ENCODE measurements at regions of chr17 and their contacts with region 1.

Region 1: GRCh38 chr17:30236766-30237165 is 1.3 kb upstream of the SLC6A4 start:
- DNase-seq: no peak
- ATAC-seq: peak; percentile 75
- H3K4me3 ChIP-seq: no peak overlapping the region
- H3K27ac ChIP-seq: no peak overlapping the region
- H3K4me1 ChIP-seq: peaks cover 29% of the 10 kb centered on the region
- H3K27me3 ChIP-seq: no peaks in the 10 kb centered on the region
- CTCF ChIP-seq: peak; percentile 38 to 70 (median 65)
- EP300 ChIP-seq: no peak
- POLR2A ChIP-seq: no peak
- RAD21 ChIP-seq: peak; percentile 80

Region 2: GRCh38 chr17:30116661-30117551 is 119.9 kb before region 1 on chr17 and contains the start of gene NSRP1:
- CTCF ChIA-PET with region 1: interaction called, 20 read pairs
- POLR2A ChIA-PET with region 1: no interaction called
- RAD21 ChIA-PET with region 1: interaction called, 5 read pairs
- SMC1A ChIA-PET with region 1: interaction called, 5 read pairs
- in situ Hi-C with region 1: no loop called
- intact Hi-C with region 1: no loop called
- DNase-seq: peak; percentile 89
- ATAC-seq: peak; percentile 91
- H3K4me3 ChIP-seq: peak within 1 kb of the TSS; percentile 95
- H3K27ac ChIP-seq: peak within 1 kb of the TSS; percentile 94
- H3K4me1 ChIP-seq: peaks cover 9% of the 10 kb centered on the region
- H3K27me3 ChIP-seq: no peaks in the 10 kb centered on the region
- CTCF ChIP-seq: no peak
- EP300 ChIP-seq: no peak
- POLR2A ChIP-seq: peak; percentile 100
- RAD21 ChIP-seq: no peak
- polyA plus RNA-seq, gene NSRP1: 57.2 to 69.7 TPM

Region 3: GRCh38 chr17:30134551-30134950 is 102.2 kb before region 1 on chr17:
- CTCF ChIA-PET with region 1: interaction called, 8 read pairs
- POLR2A ChIA-PET with region 1: no interaction called
- RAD21 ChIA-PET with region 1: interaction called, 6 read pairs
- SMC1A ChIA-PET with region 1: interaction called, 4 read pairs
- in situ Hi-C with region 1: loop called (anchors 5 kb)
- intact Hi-C with region 1: no loop called
- DNase-seq: no peak
- ATAC-seq: no peak
- H3K4me3 ChIP-seq: no peak overlapping the region
- H3K27ac ChIP-seq: no peak overlapping the region
- H3K4me1 ChIP-seq: no peaks in the 10 kb centered on the region
- H3K27me3 ChIP-seq: no peaks in the 10 kb centered on the region
- CTCF ChIP-seq: no peak
- EP300 ChIP-seq: no peak
- POLR2A ChIP-seq: no peak
- RAD21 ChIP-seq: no peak

Region 4: DNA sequence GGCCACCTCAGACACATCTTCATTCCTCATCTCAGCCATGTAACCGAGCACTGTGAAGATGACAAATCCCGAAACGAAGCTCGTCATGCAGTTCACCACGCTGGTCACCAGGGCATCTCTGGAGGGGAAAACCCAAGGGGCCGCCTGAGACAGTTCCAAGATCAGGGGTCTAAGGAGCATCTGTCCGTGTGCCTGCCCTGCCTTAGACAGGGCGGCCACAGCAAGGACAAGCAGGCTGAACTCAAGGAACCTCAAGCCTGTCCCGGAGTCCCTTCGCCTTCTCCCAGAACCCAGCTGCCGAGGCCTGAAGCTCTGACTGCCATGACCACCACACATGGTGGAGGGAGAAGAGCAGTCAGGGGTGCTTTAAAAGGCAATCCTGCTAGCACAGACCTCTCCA is 24.0 kb before region 1 on chr17:
- CTCF ChIA-PET with region 1: interaction called, 14 read pairs
- POLR2A ChIA-PET with region 1: no interaction called
- RAD21 ChIA-PET with region 1: interaction called, 8 read pairs
- SMC1A ChIA-PET with region 1: interaction called, 5 read pairs
- in situ Hi-C with region 1: no loop called
- intact Hi-C with region 1: no loop called
- DNase-seq: peak; percentile 72
- ATAC-seq: peak; percentile 91
- H3K4me3 ChIP-seq: peak overlapping the region; percentile 19; the same call in 1 of the 2 replicates
- H3K27ac ChIP-seq: peak overlapping the region; percentile 85
- H3K4me1 ChIP-seq: peaks cover 36% of the 10 kb centered on the region
- H3K27me3 ChIP-seq: no peaks in the 10 kb centered on the region
- CTCF ChIP-seq: peak; percentile 0 to 47 (median 34); a peak in 3 of 6 replicates
- EP300 ChIP-seq: peak; percentile 32 to 50; a peak in 2 of 4 replicates
- POLR2A ChIP-seq: peak; percentile 49; the same call in 1 of the 2 replicates
- RAD21 ChIP-seq: 0 out of 2 replicates have a peak, but pooled peaks have one; percentile 29

Measured in GM12878 (cell line).